ENCODE measurements at regions of chr6 and their contacts with region 1.

Region 1: GRCh38 chr6:1424306-1424928 is 35.0 kb downstream of the FOXF2 start:
- DNase-seq: peak; percentile 53
- H3K4me3 ChIP-seq: no peak overlapping the region
- H3K27ac ChIP-seq: no peak overlapping the region
- H3K4me1 ChIP-seq: no peaks in the 10 kb centered on the region
- H3K27me3 ChIP-seq: no peaks in the 10 kb centered on the region
- CTCF ChIP-seq: peak; percentile 83 to 84

Region 2: GRCh38 chr6:582370-582769 is 842.0 kb before region 1 on chr6:
- CTCF ChIA-PET with region 1: interaction called, 19 read pairs
- dilution Hi-C with region 1: no loop called
- in situ Hi-C with region 1: no loop called
- intact Hi-C with region 1: no loop called
- DNase-seq: no peak
- H3K4me3 ChIP-seq: no peak overlapping the region
- H3K27ac ChIP-seq: no peak overlapping the region
- H3K4me1 ChIP-seq: peaks cover 17% of the 10 kb centered on the region
- H3K27me3 ChIP-seq: no peaks in the 10 kb centered on the region
- CTCF ChIP-seq: no peak

Region 3: GRCh38 chr6:1222728-1223595 is 201.5 kb before region 1 on chr6:
- CTCF ChIA-PET with region 1: no interaction called
- dilution Hi-C with region 1: no loop called
- in situ Hi-C with region 1: no loop called
- intact Hi-C with region 1: no loop called
- DNase-seq: no peak
- H3K4me3 ChIP-seq: no peak overlapping the region
- H3K27ac ChIP-seq: no peak overlapping the region
- H3K4me1 ChIP-seq: no peaks in the 10 kb centered on the region
- H3K27me3 ChIP-seq: no peaks in the 10 kb centered on the region
- CTCF ChIP-seq: no peak

Measured in mammary epithelial cell (primary cell).